ENCODE measurements at regions of chr4 and their contacts with region 1.

Region 1: GRCh38 chr4:98260579-98261290 is 449 bp upstream of the RAP1GDS1 start:
- DNase-seq: peak; percentile 86
- H3K4me3 ChIP-seq: peak overlapping the region; percentile 75
- H3K27ac ChIP-seq: peak overlapping the region; percentile 89
- H3K4me1 ChIP-seq: peaks cover 28% of the 10 kb centered on the region
- H3K27me3 ChIP-seq: no peaks in the 10 kb centered on the region
- CTCF ChIP-seq: no peak

Region 2: GRCh38 chr4:98166025-98166730 is 94.6 kb before region 1 on chr4:
- CTCF ChIA-PET with region 1: no interaction called
- POLR2A ChIA-PET with region 1: no interaction called
- intact Hi-C with region 1: loop called (anchors 5 kb)
- DNase-seq: peak; percentile 66 to 78
- H3K4me3 ChIP-seq: no peak overlapping the region
- H3K27ac ChIP-seq: no peak overlapping the region
- H3K4me1 ChIP-seq: peaks cover 15% of the 10 kb centered on the region
- H3K27me3 ChIP-seq: no peaks in the 10 kb centered on the region
- CTCF ChIP-seq: no peak

Region 3: GRCh38 chr4:98289375-98289774 is 28.6 kb after region 1 on chr4:
- CTCF ChIA-PET with region 1: no interaction called
- POLR2A ChIA-PET with region 1: no interaction called
- intact Hi-C with region 1: loop called (anchors 2 kb)
- DNase-seq: no peak
- H3K4me3 ChIP-seq: no peak overlapping the region
- H3K27ac ChIP-seq: no peak overlapping the region
- H3K4me1 ChIP-seq: peaks cover 4% of the 10 kb centered on the region; the same call in 1 of the 2 replicates
- H3K27me3 ChIP-seq: no peaks in the 10 kb centered on the region
- CTCF ChIP-seq: no peak

Region 4: DNA sequence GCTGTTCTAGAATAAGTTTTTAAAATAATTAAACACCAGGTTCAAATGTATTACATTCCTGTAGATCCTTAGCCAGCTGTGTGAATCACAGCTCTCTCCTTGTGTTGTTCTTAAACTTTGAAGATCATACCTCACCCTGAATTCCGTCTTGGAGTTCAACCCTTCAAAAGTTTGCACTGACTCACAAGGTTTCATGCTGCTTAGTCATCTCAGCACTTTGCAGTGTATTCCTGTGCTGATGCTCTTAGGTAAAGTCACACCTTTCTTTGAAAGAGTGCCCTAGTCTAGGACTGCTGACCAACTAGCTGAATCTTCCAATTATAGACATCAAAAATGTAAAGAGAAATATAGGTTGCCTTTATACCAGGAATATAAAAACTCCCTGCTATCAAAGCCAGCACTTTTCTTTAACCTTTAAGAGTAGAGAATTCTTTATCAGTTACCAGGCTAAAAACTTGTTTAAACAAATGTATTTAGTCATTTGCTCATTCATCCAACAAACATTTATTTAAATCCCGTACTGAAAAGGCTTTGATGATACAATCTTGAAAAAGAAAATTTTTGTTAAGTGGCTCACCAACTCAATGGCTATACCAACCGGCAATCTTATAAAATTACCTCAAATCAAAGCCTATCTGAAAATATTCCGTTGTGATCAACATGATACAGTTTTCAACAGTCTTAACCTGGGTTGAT is 170.1 kb after region 1 on chr4:
- CTCF ChIA-PET with region 1: no interaction called
- POLR2A ChIA-PET with region 1: no interaction called
- intact Hi-C with region 1: loop called (anchors 2 kb)
- DNase-seq: peak; percentile 37 to 94
- H3K4me3 ChIP-seq: no peak overlapping the region
- H3K27ac ChIP-seq: peak overlapping the region; percentile 62
- H3K4me1 ChIP-seq: peaks cover 23% of the 10 kb centered on the region
- H3K27me3 ChIP-seq: no peaks in the 10 kb centered on the region
- CTCF ChIP-seq: no peak

Region 5: DNA sequence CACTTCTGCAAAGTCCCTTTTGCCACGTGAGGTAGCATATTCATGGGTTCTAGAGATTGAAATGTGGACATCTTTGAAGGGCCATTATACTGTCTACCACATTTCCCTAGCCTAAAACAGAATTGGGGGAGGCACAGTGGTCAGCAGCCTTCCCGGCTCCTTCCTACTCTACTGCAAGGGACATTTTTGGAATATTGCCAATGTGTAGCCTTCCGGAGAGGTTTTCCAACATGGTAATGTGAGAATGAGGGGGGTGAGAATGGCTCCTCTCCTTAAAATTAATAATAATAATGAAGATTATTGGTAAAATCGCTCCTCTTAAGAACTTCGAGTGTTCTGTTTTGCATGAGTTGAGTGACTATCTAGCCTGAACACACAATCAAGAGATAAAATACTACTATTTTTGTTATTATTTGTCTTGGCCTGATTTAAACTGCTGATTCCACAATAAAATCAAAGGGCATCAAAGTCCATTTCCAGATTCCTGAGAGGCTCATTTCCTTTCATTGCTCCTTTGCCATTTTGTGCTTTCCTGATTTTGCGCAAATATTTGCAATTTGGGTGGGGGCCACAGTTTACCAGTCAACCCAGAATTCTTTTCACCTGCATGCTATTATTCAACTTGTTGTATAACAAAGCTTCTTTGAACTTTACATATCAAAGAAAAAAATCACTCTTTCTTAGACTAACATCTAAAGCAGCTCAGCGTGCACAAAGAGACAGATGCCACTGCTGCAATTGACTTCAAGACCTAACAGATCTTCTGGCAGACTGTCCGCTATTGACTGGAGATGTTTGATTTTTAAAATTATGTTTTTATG is 424.7 kb after region 1 on chr4:
- CTCF ChIA-PET with region 1: no interaction called
- POLR2A ChIA-PET with region 1: interaction called, 15 read pairs
- intact Hi-C with region 1: no loop called
- DNase-seq: no peak
- H3K4me3 ChIP-seq: no peak overlapping the region
- H3K27ac ChIP-seq: no peak overlapping the region
- H3K4me1 ChIP-seq: peaks cover 36% of the 10 kb centered on the region
- H3K27me3 ChIP-seq: no peaks in the 10 kb centered on the region
- CTCF ChIP-seq: no peak

Measured in PC-9 (cell line).